ENCODE measurements at regions of chr5 and their contacts with region 1.

Region 1: DNA sequence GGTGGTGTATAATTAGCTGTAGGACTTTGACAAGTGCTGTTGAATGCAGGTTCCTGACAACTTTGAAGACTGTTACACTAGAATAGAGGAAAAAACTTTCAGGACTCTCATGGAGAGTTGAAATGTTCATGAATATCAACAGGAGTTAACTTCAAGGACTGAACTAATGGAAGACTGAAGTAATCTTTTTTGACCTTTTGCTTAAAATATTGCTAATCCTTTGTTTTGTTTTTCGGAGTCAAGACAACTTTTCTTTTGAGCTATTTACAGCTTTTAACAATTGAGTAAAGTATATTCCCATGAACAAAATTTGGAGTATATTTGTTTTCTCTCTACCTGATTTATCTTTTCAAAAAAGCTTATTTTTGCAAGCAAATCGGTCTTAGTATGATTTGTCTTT is 34.1 kb upstream of the MTMR12 start:
- DNase-seq: no peak
- ATAC-seq: no peak
- H3K4me3 Mint-ChIP-seq: no peak overlapping the region
- H3K27ac Mint-ChIP-seq: no peak overlapping the region
- H3K4me1 Mint-ChIP-seq: no peaks in the 10 kb centered on the region
- H3K27me3 Mint-ChIP-seq: no peaks in the 10 kb centered on the region

Region 2: DNA sequence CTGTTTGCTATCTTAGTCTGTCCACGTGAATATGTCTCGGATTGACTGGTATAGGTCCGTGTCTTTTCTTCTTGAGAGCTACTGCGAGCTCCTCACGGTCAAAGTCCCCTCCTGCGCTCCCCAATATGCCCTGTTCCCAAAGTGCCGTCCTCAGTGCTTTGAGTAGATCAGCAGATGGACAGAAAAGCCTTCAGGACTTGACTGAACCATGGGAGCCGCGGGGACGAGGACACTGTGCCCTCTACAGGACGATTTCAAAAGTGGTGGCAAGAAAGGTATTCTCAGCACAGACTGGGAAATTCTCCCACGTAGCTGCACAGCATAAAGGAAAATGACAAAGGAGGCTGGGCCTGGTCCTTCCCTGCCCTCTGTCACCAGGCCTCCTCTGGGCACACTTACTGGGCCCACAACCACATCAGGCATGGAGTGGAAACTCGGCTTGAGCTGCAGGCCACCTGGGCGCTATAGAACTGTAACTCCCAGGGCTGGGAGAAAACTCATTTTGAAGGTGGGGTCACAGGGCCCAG is 17.5 kb before region 1 on chr5:
- CTCF ChIA-PET with region 1: interaction called, 10 read pairs
- POLR2A ChIA-PET with region 1: interaction called, 5 read pairs
- DNase-seq: peak; percentile 67
- ATAC-seq: peak; percentile 92
- H3K4me3 Mint-ChIP-seq: no peak overlapping the region
- H3K27ac Mint-ChIP-seq: no peak overlapping the region
- H3K4me1 Mint-ChIP-seq: peaks cover 2% of the 10 kb centered on the region
- H3K27me3 Mint-ChIP-seq: no peaks in the 10 kb centered on the region

Region 3: GRCh38 chr5:32369542-32370155 is 22.8 kb after region 1 on chr5:
- CTCF ChIA-PET with region 1: no interaction called
- POLR2A ChIA-PET with region 1: no interaction called
- DNase-seq: no peak
- ATAC-seq: no peak
- H3K4me3 Mint-ChIP-seq: no peak overlapping the region
- H3K27ac Mint-ChIP-seq: no peak overlapping the region
- H3K4me1 Mint-ChIP-seq: no peaks in the 10 kb centered on the region
- H3K27me3 Mint-ChIP-seq: no peaks in the 10 kb centered on the region

Region 4: DNA sequence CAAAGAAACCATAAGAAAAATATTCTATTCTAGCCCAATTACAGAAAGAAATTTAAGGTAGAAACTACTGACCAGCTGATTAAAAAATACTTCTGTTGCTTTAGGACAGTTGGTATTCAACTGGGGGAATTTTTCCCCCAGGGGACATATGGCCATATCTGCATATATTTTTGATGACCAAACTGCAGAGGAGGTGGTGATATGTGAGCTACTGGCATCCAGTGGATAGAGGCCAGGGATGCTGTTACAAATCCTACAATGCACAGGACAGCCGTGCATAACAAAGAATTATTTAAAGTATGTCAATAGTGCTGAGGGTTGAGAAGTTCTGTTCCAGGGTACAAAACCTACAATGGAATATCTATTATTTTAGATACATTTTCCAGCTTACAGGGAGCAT is 73.6 kb after region 1 on chr5:
- CTCF ChIA-PET with region 1: no interaction called
- POLR2A ChIA-PET with region 1: no interaction called
- DNase-seq: no peak
- ATAC-seq: no peak
- H3K4me3 Mint-ChIP-seq: no peak overlapping the region
- H3K27ac Mint-ChIP-seq: no peak overlapping the region
- H3K4me1 Mint-ChIP-seq: peaks cover 16% of the 10 kb centered on the region
- H3K27me3 Mint-ChIP-seq: no peaks in the 10 kb centered on the region

Region 5: GRCh38 chr5:32471784-32472183 is 124.9 kb after region 1 on chr5:
- CTCF ChIA-PET with region 1: no interaction called
- POLR2A ChIA-PET with region 1: no interaction called
- DNase-seq: no peak
- ATAC-seq: no peak
- H3K4me3 Mint-ChIP-seq: no peak overlapping the region
- H3K27ac Mint-ChIP-seq: no peak overlapping the region
- H3K4me1 Mint-ChIP-seq: no peaks in the 10 kb centered on the region
- H3K27me3 Mint-ChIP-seq: peaks cover 6% of the 10 kb centered on the region

Region 6: GRCh38 chr5:32767948-32768427 is 421.1 kb after region 1 on chr5:
- CTCF ChIA-PET with region 1: no interaction called
- POLR2A ChIA-PET with region 1: no interaction called
- DNase-seq: no peak
- ATAC-seq: no peak
- H3K4me3 Mint-ChIP-seq: no peak overlapping the region
- H3K27ac Mint-ChIP-seq: no peak overlapping the region
- H3K4me1 Mint-ChIP-seq: no peaks in the 10 kb centered on the region
- H3K27me3 Mint-ChIP-seq: no peaks in the 10 kb centered on the region